Adrenal gland (tissue), 19 donors: ENCODE measurements at regions of chr4 and their contacts with region 1.

Region 1: DNA sequence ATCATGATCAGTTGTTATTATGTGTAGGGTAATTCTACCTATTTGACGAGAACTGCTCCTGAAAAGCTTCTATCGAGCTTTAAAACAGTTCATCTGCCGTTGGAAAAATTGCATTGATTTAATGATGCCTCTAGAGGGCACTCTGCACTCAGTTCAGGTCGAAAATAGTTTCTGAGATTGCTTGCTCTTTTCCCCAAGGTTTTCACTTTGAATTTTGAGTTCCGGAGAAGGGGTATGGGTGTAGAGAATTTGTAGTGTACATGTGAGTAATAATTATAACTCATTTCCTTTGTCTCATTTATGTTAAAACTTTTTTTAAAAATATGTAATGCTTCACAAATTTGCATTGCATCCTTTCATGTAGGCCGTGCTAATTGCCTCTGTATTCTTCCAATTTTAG is 28.4 kb upstream of the TNIP3 start:
- DNase-seq: peak in 1 of 7 donors; percentile 14
- H3K4me3 ChIP-seq: no peak overlapping the region
- H3K27ac ChIP-seq: no peak overlapping the region
- H3K4me1 ChIP-seq: no peaks in the 10 kb centered on the region
- H3K27me3 ChIP-seq: no peaks in the 10 kb centered on the region
- CTCF ChIP-seq: peak; percentile 52 to 85 (median 70)
- POLR2A ChIP-seq: no peak

Region 2: GRCh38 chr4:121252224-121252806 is 59.8 kb after region 1 on chr4:
- intact Hi-C with region 1: loop called (anchors 5 kb)
- DNase-seq: peak; percentile 58 to 87 (median 75)
- H3K4me3 ChIP-seq: no peak overlapping the region
- H3K27ac ChIP-seq: no peak overlapping the region
- H3K4me1 ChIP-seq: no peaks in the 10 kb centered on the region
- H3K27me3 ChIP-seq: no peaks in the 10 kb centered on the region
- CTCF ChIP-seq: peak; percentile 71 to 88 (median 76)
- POLR2A ChIP-seq: no peak